Gastrocnemius medialis (tissue), 4 donors: ENCODE measurements at regions of chr15 and their contacts with region 1.

Region 1: GRCh38 chr15:86413191-86413590 is 333.5 kb downstream of the AGBL1 start:
- DNase-seq: no peak
- ATAC-seq: no peak
- H3K4me3 ChIP-seq: no peak overlapping the region
- H3K27ac ChIP-seq: no peak overlapping the region
- H3K4me1 ChIP-seq: no peaks in the 10 kb centered on the region
- H3K27me3 ChIP-seq: no peaks in the 10 kb centered on the region
- CTCF ChIP-seq: no peak
- POLR2A ChIP-seq: no peak

Region 2: DNA sequence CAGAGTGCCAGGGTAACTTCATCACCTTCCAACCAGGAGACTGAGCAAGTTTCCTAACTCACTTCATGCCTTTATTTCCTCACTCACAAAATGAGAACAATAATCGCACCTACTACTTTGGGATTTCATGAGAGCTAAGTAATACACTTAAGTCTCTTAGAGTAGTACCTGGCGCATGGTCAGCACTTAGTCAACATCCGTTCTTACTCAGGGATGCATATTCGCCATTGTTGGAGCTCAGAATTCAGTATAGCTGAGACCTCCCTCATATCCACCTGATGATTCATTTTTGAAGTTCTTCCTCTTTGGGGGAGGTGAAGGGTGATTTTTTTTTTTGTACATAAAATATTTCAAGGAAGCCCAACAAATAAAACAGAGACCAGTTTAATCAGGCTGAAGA is 145.3 kb before region 1 on chr15:
- in situ Hi-C with region 1: no loop called
- intact Hi-C with region 1: no loop called
- DNase-seq: no peak
- ATAC-seq: no peak
- H3K4me3 ChIP-seq: no peak overlapping the region
- H3K27ac ChIP-seq: no peak overlapping the region
- H3K4me1 ChIP-seq: no peaks in the 10 kb centered on the region
- H3K27me3 ChIP-seq: no peaks in the 10 kb centered on the region
- CTCF ChIP-seq: no peak
- POLR2A ChIP-seq: no peak

Region 3: DNA sequence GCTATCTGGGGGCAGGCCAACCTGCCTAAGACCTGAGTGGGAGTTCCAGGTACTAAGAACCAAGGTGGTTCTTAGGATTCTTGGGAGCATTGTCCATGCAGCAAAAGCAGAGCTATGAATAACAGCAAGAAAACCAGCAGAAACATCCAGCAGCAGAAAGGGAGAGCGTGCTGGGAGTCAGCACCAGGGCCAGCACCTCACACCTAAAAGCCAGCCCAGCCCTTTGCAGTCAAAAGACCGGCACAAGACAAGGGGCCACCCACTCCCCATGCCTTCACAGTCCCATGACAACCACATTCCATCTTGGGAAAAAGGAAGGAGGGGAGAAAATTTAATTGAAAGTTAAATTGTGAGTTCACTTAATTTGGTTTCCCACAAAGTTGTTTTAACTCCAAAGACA is 31.3 kb after region 1 on chr15:
- in situ Hi-C with region 1: no loop called
- intact Hi-C with region 1: no loop called
- DNase-seq: no peak
- ATAC-seq: no peak
- H3K4me3 ChIP-seq: no peak overlapping the region
- H3K27ac ChIP-seq: no peak overlapping the region
- H3K4me1 ChIP-seq: no peaks in the 10 kb centered on the region
- H3K27me3 ChIP-seq: no peaks in the 10 kb centered on the region
- CTCF ChIP-seq: no peak
- POLR2A ChIP-seq: no peak

Region 4: GRCh38 chr15:86502301-86502700 is 89.1 kb after region 1 on chr15:
- in situ Hi-C with region 1: loop called in 1 of 4 experiments (anchors 25 kb)
- intact Hi-C with region 1: no loop called
- DNase-seq: no peak
- ATAC-seq: no peak
- H3K4me3 ChIP-seq: no peak overlapping the region
- H3K27ac ChIP-seq: no peak overlapping the region
- H3K4me1 ChIP-seq: no peaks in the 10 kb centered on the region
- H3K27me3 ChIP-seq: no peaks in the 10 kb centered on the region
- CTCF ChIP-seq: no peak
- POLR2A ChIP-seq: no peak

Region 5: DNA sequence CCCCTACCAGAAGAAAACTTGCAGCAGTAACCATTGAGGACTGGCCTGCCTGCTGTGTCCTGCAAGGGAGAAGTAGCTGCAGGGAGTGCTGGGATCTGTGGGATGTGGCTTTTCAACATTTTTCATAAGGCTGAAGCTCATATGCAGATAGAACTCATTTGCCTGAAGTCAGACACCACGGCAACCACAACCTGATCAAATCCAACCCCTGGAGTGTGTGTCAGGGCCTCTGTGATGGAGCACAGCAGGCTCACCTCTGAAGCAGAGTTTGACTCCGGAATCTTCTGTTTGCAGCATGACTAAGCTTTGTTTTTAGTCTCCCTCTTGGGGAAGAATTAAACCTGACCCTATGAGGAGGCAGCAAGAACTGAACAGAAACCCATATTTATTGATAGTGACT is 175.2 kb after region 1 on chr15:
- in situ Hi-C with region 1: no loop called
- intact Hi-C with region 1: no loop called
- DNase-seq: no peak
- ATAC-seq: no peak
- H3K4me3 ChIP-seq: no peak overlapping the region
- H3K27ac ChIP-seq: no peak overlapping the region
- H3K4me1 ChIP-seq: peaks cover 0 to 4% of the 10 kb centered on the region in 2 donors
- H3K27me3 ChIP-seq: no peaks in the 10 kb centered on the region
- CTCF ChIP-seq: no peak
- POLR2A ChIP-seq: no peak